CD8-positive, alpha-beta memory T cell (primary cell): ENCODE measurements at regions of chr19 and their contacts with region 1.

Region 1: DNA sequence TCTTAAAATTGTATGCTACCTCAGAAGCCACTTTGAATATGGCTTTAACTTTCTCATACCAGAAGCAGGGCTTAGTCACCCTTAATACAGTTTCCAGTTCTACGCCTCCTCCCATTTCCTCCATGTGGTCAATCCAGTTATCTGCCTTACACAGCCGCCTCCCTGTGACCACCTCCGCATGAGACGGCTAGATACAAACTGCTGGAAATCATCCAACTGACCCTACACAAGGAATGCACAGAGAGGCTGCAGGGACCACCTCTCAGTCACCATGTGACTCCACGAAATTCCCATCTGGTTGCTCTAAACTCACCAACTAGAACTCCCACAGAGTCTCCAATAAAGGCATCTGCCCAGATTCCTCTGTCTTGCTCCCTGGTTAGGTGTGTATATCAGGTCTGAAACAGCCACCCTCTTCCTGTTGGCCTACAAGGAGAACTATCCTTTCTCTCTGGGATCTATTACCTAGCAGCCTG is 6.8 kb downstream of the ZNF564 start:
- DNase-seq: no peak
- H3K4me3 ChIP-seq: no peak overlapping the region
- H3K4me3 Mint-ChIP-seq: peak overlapping the region in 1 of 7 donors; percentile 20
- H3K27ac ChIP-seq: no peak overlapping the region
- H3K27ac Mint-ChIP-seq: peak overlapping the region in 7 of 8 donors; percentile 24 to 78 (median 40)
- H3K4me1 ChIP-seq: peaks cover 26% of the 10 kb centered on the region
- H3K4me1 Mint-ChIP-seq: peaks cover 46 to 64% (median 61%) of the 10 kb centered on the region in 3 donors
- H3K27me3 ChIP-seq: no peaks in the 10 kb centered on the region
- H3K27me3 Mint-ChIP-seq: no peaks in the 10 kb centered on the region

Region 2: GRCh38 chr19:13079542-13079986 is 535.1 kb after region 1 on chr19:
- CTCF ChIA-PET with region 1: no interaction called
- POLR2A ChIA-PET with region 1: interaction called, 17 read pairs
- DNase-seq: no peak
- H3K4me3 ChIP-seq: no peak overlapping the region
- H3K4me3 Mint-ChIP-seq: no peak overlapping the region
- H3K27ac ChIP-seq: no peak overlapping the region
- H3K27ac Mint-ChIP-seq: no peak overlapping the region
- H3K4me1 ChIP-seq: no peaks in the 10 kb centered on the region
- H3K4me1 Mint-ChIP-seq: peaks cover 0 to 4% (median 0%) of the 10 kb centered on the region in 3 donors
- H3K27me3 ChIP-seq: no peaks in the 10 kb centered on the region
- H3K27me3 Mint-ChIP-seq: peaks cover 0 to 3% of the 10 kb centered on the region in 2 donors